GM10248 (cell line): ENCODE measurements at regions of chr7 and their contacts with region 1.

Region 1: GRCh38 chr7:38369816-38370493 is 96.5 kb upstream of the TARP start:
- DNase-seq: peak; percentile 63
- CTCF ChIP-seq: peak; percentile 95

Region 2: DNA sequence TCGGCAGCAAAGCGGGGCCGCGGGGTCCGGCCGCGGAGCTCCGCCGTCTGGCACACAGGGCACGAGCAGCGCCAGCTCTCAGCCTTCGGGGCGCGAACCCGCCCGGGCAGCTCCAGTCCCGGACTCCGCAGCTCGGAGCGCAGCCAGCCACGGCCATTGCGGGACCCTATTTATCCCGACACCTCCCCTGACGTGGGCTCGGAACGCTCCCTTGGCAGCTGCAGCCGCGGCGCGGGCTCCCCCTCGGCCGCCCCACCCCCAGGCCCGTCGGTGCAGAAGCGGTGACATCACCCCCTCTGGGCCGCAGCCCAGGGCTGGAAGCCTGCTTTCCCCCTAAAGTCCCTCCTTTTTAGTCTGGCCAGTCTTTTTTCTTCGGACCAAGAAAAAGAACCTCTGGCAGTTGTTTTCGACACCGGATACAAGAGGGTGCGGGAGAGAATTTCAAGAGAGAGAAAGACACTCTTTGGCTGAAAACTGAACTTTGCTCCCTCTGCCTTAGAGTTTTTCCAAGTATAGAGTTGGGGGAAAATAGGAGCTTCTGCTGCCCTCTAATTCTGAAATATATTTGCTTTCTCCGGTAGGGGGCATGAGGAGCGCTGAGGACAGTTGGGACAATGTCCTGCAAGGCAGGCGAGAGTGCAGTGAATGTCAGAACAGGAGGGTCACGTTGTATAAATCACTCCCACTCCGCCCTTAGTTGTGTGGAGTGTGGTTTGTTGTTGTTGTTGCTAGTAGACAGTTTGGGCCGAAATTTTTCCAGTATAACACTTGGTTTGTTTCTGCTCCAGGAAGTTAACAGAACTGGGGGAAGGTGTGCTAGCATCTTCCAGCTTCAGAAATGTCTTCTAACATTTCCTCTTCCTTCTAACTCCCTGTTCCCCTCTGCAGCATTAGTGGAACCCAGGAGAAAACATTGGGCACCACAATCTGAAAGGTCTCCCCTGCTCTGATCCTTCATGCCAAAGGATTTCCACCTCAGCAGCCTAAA is 453.0 kb before region 1 on chr7 and contains the start of gene SFRP4:
- CTCF ChIA-PET with region 1: interaction called, 11 read pairs
- POLR2A ChIA-PET with region 1: no interaction called
- DNase-seq: peak; percentile 51
- CTCF ChIP-seq: peak; percentile 66

Region 3: GRCh38 chr7:38222481-38223096 is 147.4 kb before region 1 on chr7:
- CTCF ChIA-PET with region 1: interaction called, 103 read pairs
- POLR2A ChIA-PET with region 1: no interaction called
- DNase-seq: peak; percentile 55
- CTCF ChIP-seq: peak; percentile 76

Region 4: GRCh38 chr7:38306171-38306570 is 63.8 kb before region 1 on chr7:
- CTCF ChIA-PET with region 1: interaction called, 12 read pairs
- POLR2A ChIA-PET with region 1: no interaction called
- DNase-seq: no peak
- CTCF ChIP-seq: no peak

Region 5: DNA sequence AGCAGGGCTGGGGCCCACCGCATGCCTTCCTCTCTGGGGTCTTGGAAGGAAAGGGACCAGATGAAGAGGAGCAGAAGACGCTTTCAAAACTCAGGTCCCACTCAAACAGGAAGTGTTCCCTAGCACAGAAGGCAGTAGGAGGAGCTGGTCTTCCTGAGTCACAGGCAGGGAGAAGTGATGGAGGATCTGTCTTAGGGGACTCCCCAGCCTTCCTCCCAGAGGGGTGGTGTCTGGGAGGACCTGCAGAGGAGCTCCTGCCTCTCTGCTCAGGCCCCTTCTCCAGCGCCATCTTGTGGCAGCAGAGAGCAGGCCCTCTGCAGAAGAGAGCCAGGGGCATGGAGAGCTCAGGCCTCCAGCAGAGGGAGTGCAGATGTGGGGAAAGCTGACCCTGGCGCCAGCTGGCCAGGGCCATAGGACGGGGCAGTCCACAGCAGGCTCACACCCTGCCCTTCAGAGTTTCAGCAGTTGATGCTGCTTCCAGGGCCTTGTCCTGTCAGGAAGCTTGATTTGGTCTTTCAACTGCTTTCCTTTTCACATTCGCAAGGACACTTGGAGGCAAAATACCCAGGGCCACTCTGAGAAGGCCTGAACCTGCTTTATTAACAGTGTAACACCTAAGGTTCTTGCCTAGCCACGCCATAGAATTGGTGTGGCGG is 34.3 kb before region 1 on chr7:
- CTCF ChIA-PET with region 1: interaction called, 50 read pairs
- POLR2A ChIA-PET with region 1: no interaction called
- DNase-seq: peak; percentile 84
- CTCF ChIP-seq: peak; percentile 100

Region 6: DNA sequence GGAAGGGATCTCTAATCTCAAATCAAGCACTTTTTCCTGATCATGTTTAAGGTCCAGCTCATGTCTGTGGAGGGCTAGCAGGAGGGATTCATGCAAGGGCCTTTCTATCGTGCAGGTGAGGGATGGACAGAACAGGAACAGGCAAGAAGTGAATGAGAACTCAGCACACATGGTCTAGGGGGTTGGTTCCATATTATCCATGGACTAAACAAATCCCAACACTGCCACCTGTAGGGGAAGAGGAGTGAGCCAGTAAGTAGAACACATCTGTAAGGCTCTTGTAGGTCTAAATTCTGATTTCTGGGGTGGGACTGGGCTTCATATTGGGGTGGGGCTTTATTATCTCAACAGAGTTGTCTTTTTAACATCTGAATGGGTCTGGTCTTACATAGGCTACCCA is 41.4 kb after region 1 on chr7:
- CTCF ChIA-PET with region 1: interaction called, 15 read pairs
- POLR2A ChIA-PET with region 1: no interaction called
- DNase-seq: no peak
- CTCF ChIP-seq: no peak